Activated CD4-positive, alpha-beta T cell treated with anti-CD3 and anti-CD28 coated beads for 36 hours (primary cell): ENCODE measurements at regions of chr10 and their contacts with region 1.

Region 1: GRCh38 chr10:5434017-5434753 is 21.8 kb downstream of the NET1 start:
- DNase-seq: no peak
- ATAC-seq: peak; percentile 57
- H3K4me3 Mint-ChIP-seq: no peak overlapping the region
- H3K27ac Mint-ChIP-seq: no peak overlapping the region
- H3K4me1 Mint-ChIP-seq: peaks cover 13% of the 10 kb centered on the region
- H3K27me3 Mint-ChIP-seq: no peaks in the 10 kb centered on the region

Region 2: DNA sequence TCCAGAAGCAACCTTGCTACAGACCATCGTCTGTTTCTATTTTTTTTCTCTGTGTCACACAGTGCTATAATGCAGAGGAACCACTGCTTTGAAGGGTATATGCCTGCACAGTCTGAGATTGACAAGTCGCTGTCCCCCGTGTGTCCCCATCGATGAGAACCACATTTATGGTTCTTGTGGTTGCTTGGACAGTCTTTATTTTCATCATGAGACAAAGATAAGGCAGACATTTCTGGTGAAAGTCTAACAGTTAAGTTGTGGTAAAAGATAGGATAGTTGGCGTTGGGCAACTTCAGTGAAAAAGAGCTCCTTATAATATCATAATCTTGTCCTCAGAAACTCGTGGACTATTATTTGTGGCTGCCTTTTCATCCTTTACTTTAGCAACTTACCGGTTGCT is 614.5 kb before region 1 on chr10:
- CTCF ChIA-PET with region 1: interaction called, 3 read pairs
- POLR2A ChIA-PET with region 1: no interaction called
- intact Hi-C with region 1: loop called in 1 of 2 experiments (anchors 5 kb)
- DNase-seq: no peak
- ATAC-seq: no peak
- H3K4me3 Mint-ChIP-seq: no peak overlapping the region
- H3K27ac Mint-ChIP-seq: no peak overlapping the region
- H3K4me1 Mint-ChIP-seq: no peaks in the 10 kb centered on the region
- H3K27me3 Mint-ChIP-seq: peaks cover 6% of the 10 kb centered on the region

Region 3: GRCh38 chr10:5293691-5294550 is 140.3 kb before region 1 on chr10:
- CTCF ChIA-PET with region 1: interaction called, 3 read pairs
- POLR2A ChIA-PET with region 1: no interaction called
- intact Hi-C with region 1: loop called in 1 of 2 experiments (anchors 5 kb)
- DNase-seq: peak; percentile 88
- ATAC-seq: peak; percentile 62
- H3K4me3 Mint-ChIP-seq: peak overlapping the region; percentile 76
- H3K27ac Mint-ChIP-seq: peak overlapping the region; percentile 98
- H3K4me1 Mint-ChIP-seq: peaks cover 72% of the 10 kb centered on the region
- H3K27me3 Mint-ChIP-seq: no peaks in the 10 kb centered on the region

Region 4: GRCh38 chr10:5423771-5424170 is 10.4 kb before region 1 on chr10:
- CTCF ChIA-PET with region 1: interaction called, 32 read pairs
- POLR2A ChIA-PET with region 1: no interaction called
- intact Hi-C with region 1: no loop called
- DNase-seq: no peak
- ATAC-seq: no peak
- H3K4me3 Mint-ChIP-seq: no peak overlapping the region
- H3K27ac Mint-ChIP-seq: no peak overlapping the region
- H3K4me1 Mint-ChIP-seq: peaks cover 2% of the 10 kb centered on the region
- H3K27me3 Mint-ChIP-seq: no peaks in the 10 kb centered on the region